Cardiac septum (tissue), 1 donor: ENCODE measurements at regions of chr1 and their contacts with region 1.

Region 1: DNA sequence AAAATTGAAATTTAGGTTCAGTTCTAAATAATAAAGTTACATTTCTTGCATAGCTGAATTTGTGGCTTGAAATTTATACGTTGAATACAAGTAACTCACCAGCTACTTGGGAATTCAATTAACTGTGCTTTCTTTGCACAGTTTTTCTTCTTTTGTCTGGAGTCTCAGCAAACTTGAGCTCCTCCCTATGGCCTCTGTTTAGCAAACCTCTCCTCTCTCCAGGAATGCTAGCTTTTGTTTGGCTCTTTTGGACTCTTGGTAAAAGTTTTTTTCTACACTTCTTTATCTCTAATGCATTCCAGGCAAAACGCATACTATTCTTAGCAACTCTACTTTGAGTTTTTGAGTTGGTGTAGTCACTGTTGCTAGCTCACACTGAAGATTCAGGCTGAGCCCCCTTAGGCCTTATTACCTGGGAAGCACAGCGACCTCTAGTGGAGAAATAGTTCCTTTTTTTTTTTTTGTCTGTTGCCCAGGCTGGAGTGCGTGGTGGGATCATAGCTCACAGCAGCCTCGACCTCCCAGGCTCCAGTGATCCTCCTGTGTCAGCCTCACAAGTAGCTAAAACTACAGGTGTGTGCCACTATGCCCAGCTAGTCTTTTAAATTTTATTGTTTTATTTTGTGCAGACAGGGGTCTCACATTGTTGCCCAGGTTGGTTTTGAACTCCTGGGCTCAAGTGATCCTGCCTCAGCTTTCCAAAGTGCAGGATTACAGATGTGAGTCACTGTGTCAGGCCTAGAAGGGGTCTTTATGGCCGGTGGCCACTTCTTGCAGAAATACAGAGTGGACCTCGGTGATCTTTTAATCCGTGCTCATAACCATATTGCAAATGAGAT is 61.7 kb downstream of the CASQ2 start:
- DNase-seq: no peak

Region 2: GRCh38 chr1:115456441-115456961 is 250.3 kb before region 1 on chr1:
- intact Hi-C with region 1: no loop called
- DNase-seq: no peak

Region 3: DNA sequence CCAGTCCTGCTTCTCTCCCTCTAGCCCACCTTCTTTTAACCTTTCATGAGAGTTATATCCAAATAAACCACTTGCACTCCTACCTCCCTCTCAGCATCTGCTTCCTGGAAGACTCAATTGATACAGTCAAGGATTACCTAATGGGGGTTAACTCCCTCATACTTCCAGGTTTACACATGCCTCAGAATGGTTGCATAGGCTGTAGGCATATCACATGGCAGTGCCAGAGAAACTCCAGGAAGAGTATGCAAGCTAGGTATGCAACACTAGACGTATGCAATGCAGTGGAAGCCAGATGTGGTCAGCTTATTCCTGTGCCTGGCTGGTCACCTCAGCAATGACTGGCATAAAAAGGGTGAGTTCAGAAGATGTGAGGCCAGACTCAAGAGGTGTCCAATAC is 97.8 kb before region 1 on chr1:
- intact Hi-C with region 1: loop called (anchors 2 kb)
- DNase-seq: no peak

Region 4: GRCh38 chr1:115753830-115754229 is 47.0 kb after region 1 on chr1:
- intact Hi-C with region 1: loop called (anchors 5 kb)
- DNase-seq: peak; percentile 83